Heart right ventricle (tissue), 16 donors: ENCODE measurements at regions of chr15 and their contacts with region 1.

Region 1: DNA sequence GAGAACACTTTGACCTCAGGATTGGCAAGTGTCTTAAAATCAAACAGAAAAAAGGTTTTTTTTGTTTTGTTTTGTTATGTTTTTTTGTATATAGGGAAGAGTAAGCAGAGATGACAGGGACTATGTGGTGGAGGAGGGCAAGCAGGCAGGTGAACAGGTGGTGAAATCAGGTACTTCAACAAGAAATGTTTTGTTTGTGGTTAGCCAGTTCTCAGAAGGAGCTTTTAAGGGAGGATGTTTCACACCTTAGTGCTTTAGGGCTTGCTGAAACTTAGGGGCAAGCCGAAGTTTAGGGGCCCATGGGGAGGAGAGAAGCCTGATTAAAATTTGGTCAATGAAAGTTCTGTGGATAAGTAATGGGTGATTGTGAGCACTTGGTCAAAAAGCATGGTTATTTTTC is 370.7 kb upstream of the SLCO3A1 start:
- DNase-seq: no peak
- ATAC-seq: no peak
- H3K4me3 ChIP-seq: no peak overlapping the region
- H3K27ac ChIP-seq: no peak overlapping the region
- H3K4me1 ChIP-seq: no peaks in the 10 kb centered on the region
- H3K27me3 ChIP-seq: no peaks in the 10 kb centered on the region
- CTCF ChIP-seq: no peak

Region 2: GRCh38 chr15:91414124-91414523 is 68.7 kb before region 1 on chr15:
- intact Hi-C with region 1: no loop called
- DNase-seq: no peak
- ATAC-seq: no peak
- H3K4me3 ChIP-seq: no peak overlapping the region
- H3K27ac ChIP-seq: no peak overlapping the region
- H3K4me1 ChIP-seq: peaks cover 0 to 8% (median 2%) of the 10 kb centered on the region in 9 donors
- H3K27me3 ChIP-seq: no peaks in the 10 kb centered on the region
- CTCF ChIP-seq: no peak

Region 3: DNA sequence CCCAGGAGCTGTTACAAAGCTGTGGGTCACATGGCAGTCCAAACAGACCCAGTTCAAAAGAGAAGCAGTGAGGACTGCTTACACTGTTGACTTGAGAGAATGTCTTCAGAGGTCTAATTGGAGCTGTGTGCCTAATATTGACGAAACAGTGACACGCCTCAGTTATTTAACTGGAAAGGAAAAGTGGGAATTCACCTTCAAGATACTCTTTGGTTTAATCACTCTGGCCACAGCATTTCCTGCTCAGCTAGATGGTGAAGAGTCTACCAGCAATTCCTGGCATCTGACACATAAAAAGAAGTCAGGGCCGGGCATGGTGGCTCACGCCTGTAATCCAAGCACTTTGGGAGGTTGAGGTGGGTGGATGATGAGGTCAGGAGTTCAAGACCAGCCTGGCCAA is 56.4 kb before region 1 on chr15:
- intact Hi-C with region 1: loop called in 1 of 10 experiments (anchors 10 kb)
- DNase-seq: no peak
- ATAC-seq: no peak
- H3K4me3 ChIP-seq: no peak overlapping the region
- H3K27ac ChIP-seq: no peak overlapping the region
- H3K4me1 ChIP-seq: peaks cover 0 to 4% (median 0%) of the 10 kb centered on the region in 9 donors
- H3K27me3 ChIP-seq: peaks cover 0 to 2% (median 0%) of the 10 kb centered on the region in 7 donors
- CTCF ChIP-seq: no peak